RWPE1 (cell line): ENCODE measurements at regions of chr13 and their contacts with region 1.

Region 1: DNA sequence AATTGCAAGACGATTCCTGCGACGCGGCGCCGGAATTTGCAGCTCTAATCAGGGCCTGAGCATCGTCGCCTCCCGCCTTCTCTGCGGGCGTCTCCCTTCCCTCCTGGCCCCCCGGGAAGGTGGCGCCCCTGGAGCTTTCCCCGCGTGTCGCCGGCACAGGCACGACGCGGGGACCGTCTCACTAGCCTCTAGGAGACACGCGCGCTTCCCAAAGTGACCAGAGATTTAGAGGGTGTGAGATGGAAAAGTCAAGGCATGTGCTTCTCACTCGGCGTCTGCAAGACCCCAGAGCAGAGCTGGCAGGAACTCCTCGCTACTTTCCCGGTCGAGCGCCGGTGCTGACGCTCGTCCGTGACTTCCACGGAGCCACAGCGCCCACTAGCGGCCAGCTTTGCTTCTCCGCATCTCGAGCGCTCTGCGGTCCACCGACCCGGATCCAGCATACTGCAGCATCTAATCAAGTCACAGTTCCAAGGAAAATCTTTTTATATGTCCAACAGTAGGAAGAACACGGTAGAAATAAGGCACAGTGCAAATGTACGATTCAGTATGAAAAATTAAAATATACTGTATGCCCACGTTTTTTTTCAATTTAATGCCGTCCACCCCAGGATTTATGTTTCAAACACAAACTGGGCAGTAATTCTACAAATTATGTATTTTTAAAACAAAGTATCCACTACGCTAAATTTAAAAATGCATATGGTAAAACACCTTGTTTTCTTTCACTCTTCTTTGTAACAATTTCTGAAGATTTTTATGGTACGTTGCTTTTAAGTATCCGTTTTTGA is 977 bp upstream of the EFNB2 start:
- DNase-seq: peak; percentile 72
- H3K27ac ChIP-seq: peak overlapping the region; percentile 92
- CTCF ChIP-seq: peak; percentile 95

Region 2: GRCh38 chr13:104773775-104774174 is 1762.7 kb before region 1 on chr13:
- CTCF ChIA-PET with region 1: interaction called, 11 read pairs
- POLR2A ChIA-PET with region 1: no interaction called
- DNase-seq: peak; percentile 22
- H3K27ac ChIP-seq: no peak overlapping the region
- CTCF ChIP-seq: peak; percentile 66

Region 3: DNA sequence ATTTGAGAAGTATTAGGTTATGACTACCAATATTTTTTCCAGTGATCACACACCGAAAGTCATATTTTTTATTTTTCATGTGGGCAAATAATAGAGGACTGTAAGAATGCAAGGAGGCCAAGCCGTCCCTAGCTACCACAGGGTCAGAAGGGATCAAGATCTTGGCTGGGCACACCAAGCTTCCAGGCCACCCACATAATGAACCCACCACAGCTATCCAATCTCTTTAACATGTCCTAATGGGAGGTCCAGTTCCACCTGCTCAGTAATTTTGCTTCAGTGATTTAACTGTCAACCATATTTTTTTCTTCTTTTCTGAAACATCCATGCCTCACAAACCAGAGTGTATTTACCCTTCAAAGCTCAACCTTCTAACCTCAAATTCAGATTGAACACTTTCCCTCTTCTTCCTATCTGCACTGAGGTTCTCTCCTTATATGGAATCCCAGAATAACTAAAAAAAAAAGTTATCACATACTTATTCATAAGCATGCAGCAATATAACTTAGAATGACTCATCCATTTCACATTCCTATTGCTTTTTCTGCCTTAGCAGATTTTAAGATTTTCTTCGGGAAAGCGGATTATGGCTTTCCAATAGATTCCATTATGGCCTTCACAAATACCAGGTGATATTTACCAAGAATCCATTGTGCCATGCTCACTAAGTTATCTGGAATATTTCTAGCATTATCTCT is 19.3 kb after region 1 on chr13:
- CTCF ChIA-PET with region 1: no interaction called
- POLR2A ChIA-PET with region 1: no interaction called
- DNase-seq: no peak
- H3K27ac ChIP-seq: no peak overlapping the region
- CTCF ChIP-seq: no peak

Region 4: DNA sequence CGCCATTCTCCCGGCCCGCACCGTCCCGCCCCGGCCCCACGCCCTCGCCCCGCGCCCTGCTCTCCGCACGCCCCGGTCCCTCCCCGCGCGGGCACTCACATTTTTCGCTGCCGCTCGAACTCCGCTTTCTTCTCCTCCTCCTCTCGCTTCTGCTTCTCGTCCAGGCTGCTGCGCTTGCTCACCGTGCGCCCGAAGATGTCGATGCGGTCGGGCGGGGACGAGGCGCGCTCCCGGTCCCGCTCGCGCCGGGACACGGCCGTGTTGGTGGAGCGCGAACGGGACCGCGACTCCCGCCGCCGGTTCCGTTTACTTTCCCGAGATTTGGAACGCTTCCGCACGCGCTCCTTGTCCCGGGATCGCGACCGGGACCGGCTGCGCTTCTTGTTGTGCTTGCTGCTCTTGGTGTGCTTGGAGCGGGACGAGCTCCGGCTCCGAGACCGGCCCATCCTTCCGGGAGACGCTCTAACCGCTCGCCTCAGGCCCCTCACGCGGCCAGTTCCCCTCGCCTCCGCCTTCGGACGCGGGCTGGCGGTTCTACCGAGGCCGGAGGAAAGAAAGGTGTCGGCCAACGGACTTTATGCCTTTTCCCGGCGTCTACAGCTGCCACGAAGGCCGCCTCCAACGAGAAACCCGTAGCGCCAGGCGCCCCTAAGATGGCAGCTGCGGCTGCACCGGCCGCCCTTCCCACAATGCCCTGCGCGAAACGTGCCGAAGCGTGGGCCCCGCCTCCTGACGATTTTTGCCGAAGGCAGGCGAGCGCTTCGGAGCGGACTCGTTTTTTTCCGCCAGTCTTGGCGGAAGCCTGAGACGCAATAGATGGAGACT is 31.2 kb after region 1 on chr13 and contains the start of gene ARGLU1:
- CTCF ChIA-PET with region 1: interaction called, 8 read pairs
- POLR2A ChIA-PET with region 1: interaction called, 11 read pairs
- DNase-seq: peak; percentile 92
- H3K27ac ChIP-seq: peak within 1 kb of the TSS; percentile 91
- CTCF ChIP-seq: no peak